Dorsolateral prefrontal cortex (tissue), 120 donors: ENCODE measurements at regions of chr5 and their contacts with region 1.

Region 1: GRCh38 chr5:148443998-148444397 is 60.2 kb downstream of the FBXO38 start:
- DNase-seq: peak in 3 of 10 donors; percentile 26 to 56 (median 42)
- H3K4me3 ChIP-seq: no peak overlapping the region
- H3K27ac ChIP-seq: no peak overlapping the region
- H3K27me3 ChIP-seq: no peaks in the 10 kb centered on the region
- CTCF ChIP-seq: peak; percentile 74 to 96 (median 87)

Region 2: GRCh38 chr5:148179234-148179824 is 264.7 kb before region 1 on chr5:
- intact Hi-C with region 1: loop called in 1 of 2 experiments (anchors 10 kb)
- DNase-seq: no peak
- H3K4me3 ChIP-seq: no peak overlapping the region
- H3K27ac ChIP-seq: no peak overlapping the region
- H3K27me3 ChIP-seq: no peaks in the 10 kb centered on the region
- CTCF ChIP-seq: peak; percentile 34 to 86 (median 72)

Region 3: GRCh38 chr5:148343046-148343408 is 101.0 kb before region 1 on chr5:
- intact Hi-C with region 1: no loop called
- DNase-seq: no peak
- H3K4me3 ChIP-seq: no peak overlapping the region
- H3K27ac ChIP-seq: no peak overlapping the region
- H3K27me3 ChIP-seq: no peaks in the 10 kb centered on the region
- CTCF ChIP-seq: no peak

Region 4: GRCh38 chr5:148482691-148483462 is 38.9 kb after region 1 on chr5:
- intact Hi-C with region 1: loop called in 1 of 2 experiments (anchors 5 kb)
- DNase-seq: peak in 2 of 10 donors; percentile 48 to 52
- H3K4me3 ChIP-seq: peak overlapping the region in 1 of 59 donors; percentile 33
- H3K27ac ChIP-seq: no peak overlapping the region
- H3K27me3 ChIP-seq: no peaks in the 10 kb centered on the region
- CTCF ChIP-seq: peak in 55 of 56 donors; percentile 27 to 68 (median 54)

Region 5: DNA sequence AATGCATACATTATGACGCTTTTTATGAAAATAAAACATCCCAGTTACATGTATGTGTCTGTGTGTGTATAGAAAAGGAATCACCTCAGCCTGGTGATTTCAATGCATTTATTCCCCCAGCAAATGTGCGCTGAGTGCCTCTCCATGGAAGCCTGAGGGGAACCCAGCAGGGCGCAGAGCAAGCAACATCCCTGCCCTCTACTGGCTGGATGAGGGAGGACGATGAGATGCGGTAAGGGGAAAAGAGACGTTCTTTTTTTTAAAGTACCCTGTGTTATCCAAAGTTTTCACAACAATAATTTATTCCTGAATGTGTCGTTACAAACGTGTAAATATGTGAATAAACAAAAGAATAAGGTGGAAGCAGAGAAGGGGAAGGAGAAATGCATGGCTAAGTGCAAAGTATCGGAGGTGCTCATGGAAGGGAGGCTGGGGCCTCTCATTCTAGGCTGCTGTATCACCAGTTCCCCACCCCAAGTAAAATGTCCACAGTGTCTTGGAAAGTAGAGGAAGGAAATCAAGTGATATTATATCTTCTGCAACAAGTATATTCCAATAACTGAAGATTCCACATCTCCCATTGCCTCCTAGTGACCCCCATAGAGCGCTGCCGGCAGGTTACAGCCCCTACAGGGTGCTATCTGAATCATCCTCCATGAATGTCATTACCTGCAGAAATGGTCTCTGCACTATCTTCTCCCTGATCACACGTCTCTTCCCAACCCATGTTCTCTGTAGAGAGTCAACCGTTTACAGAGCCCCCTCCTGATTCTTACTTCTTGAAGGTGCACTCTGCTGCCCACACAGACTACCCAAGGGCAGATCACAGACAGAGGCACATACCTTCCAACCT is 684.3 kb after region 1 on chr5:
- intact Hi-C with region 1: loop called in 1 of 2 experiments (anchors 10 kb)
- DNase-seq: no peak
- H3K4me3 ChIP-seq: no peak overlapping the region
- H3K27ac ChIP-seq: no peak overlapping the region
- H3K27me3 ChIP-seq: no peaks in the 10 kb centered on the region
- CTCF ChIP-seq: peak in 55 of 56 donors; percentile 36 to 74 (median 59)